ENCODE measurements at regions of chr17 and their contacts with region 1.

Region 1: DNA sequence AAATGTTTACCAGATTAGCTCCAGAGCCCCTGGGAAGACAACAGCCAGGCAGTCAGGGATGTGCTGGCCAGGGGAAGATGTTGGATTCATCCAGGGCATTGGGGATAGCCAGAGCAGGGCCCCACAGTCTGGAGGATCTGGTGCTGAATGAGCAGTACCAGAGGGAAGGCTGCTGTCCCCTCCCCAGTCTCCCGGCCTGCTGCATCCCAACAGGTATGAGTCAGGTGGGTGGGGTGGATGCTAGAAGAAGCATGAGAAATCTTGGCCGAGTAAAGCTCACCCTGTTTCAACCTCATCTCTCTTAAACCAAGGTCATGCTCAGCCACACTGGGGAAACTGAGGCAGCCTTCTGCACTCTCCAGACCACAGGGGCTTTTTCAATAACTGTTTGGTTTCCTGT is 71.9 kb upstream of the SEC14L1 start:
- DNase-seq: no peak
- ATAC-seq: no peak
- H3K4me3 ChIP-seq: no peak overlapping the region
- H3K4me3 Mint-ChIP-seq: no peak overlapping the region
- H3K27ac ChIP-seq: no peak overlapping the region
- H3K27ac Mint-ChIP-seq: no peak overlapping the region
- H3K4me1 ChIP-seq: no peaks in the 10 kb centered on the region
- H3K4me1 Mint-ChIP-seq: peaks cover 0 to 6% (median 0%) of the 10 kb centered on the region in 7 donors
- H3K27me3 ChIP-seq: no peaks in the 10 kb centered on the region
- H3K27me3 Mint-ChIP-seq: peaks cover 18 to 42% (median 29%) of the 10 kb centered on the region in 5 donors

Region 2: DNA sequence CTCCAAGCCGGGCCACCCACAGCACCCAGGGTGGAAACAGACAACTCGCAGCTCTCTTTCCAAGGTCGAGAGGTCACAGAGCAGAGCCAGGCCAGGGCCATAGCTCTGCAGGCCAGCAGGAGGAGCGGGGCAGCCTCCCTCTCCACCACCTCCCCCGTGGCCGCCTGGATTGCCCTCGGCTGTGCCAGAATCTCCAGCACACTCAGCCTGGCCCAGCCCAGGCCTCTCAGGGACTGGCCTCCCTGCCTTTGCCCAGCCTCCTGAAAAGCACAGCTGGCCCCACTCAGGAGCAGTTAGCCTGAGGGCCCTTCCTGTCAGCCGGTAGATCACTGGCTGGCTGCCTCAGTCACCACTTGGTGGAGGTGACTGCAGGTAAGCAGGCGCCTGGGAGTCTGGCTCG is 14.0 kb before region 1 on chr17:
- CTCF ChIA-PET with region 1: interaction called, 11 read pairs
- POLR2A ChIA-PET with region 1: no interaction called
- intact Hi-C with region 1: no loop called
- DNase-seq: no peak
- ATAC-seq: no peak
- H3K4me3 ChIP-seq: no peak overlapping the region
- H3K4me3 Mint-ChIP-seq: no peak overlapping the region
- H3K27ac ChIP-seq: no peak overlapping the region
- H3K27ac Mint-ChIP-seq: no peak overlapping the region
- H3K4me1 ChIP-seq: no peaks in the 10 kb centered on the region
- H3K4me1 Mint-ChIP-seq: peaks cover 0 to 5% (median 0%) of the 10 kb centered on the region in 7 donors
- H3K27me3 ChIP-seq: peaks cover 0 to 5% of the 10 kb centered on the region in 2 donors
- H3K27me3 Mint-ChIP-seq: peaks cover 4 to 21% (median 10%) of the 10 kb centered on the region in 5 donors

Region 3: DNA sequence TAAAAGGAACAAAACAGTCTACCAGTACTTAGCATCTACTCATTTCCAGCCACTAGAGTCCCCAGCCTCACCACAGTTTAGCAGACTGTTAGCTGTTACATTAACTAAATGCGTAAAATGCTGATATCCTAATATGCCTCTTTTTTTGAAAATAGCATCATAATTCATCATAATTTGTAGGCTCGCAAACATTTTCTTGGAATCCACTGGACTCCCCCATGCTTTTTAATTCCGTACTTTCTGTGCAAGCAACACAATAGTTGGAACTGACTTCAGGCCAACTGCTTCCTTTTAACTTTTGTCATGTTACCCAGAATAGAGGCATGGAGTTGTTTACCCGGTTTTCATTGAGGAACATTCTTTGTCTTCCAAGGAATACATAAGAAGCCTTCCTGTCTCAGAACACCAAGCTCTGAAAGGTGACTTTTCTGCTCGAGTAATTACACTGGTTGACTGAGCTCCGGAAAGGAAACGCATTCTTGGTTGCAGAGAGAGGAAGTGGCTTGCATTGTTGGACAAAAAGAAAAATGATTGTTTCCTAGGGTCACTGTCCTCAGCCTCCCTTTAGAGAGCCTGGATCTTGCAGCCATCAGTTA is 40.9 kb after region 1 on chr17:
- CTCF ChIA-PET with region 1: no interaction called
- POLR2A ChIA-PET with region 1: no interaction called
- intact Hi-C with region 1: no loop called
- DNase-seq: no peak
- ATAC-seq: no peak
- H3K4me3 ChIP-seq: no peak overlapping the region
- H3K4me3 Mint-ChIP-seq: peak overlapping the region in 8 of 10 donors; percentile 32 to 73 (median 60)
- H3K27ac ChIP-seq: no peak overlapping the region
- H3K27ac Mint-ChIP-seq: peak overlapping the region in 5 of 9 donors; percentile 34 to 76 (median 51)
- H3K4me1 ChIP-seq: peaks cover 8 to 14% of the 10 kb centered on the region in 2 donors
- H3K4me1 Mint-ChIP-seq: peaks cover 15 to 30% (median 26%) of the 10 kb centered on the region in 7 donors
- H3K27me3 ChIP-seq: no peaks in the 10 kb centered on the region
- H3K27me3 Mint-ChIP-seq: no peaks in the 10 kb centered on the region